Calu3 (cell line): ENCODE measurements at regions of chr2 and their contacts with region 1.

Region 1: GRCh38 chr2:151640087-151640486 is 94.2 kb downstream of the NEB start:
- DNase-seq: no peak
- H3K4me3 Mint-ChIP-seq: no peak overlapping the region
- H3K27ac Mint-ChIP-seq: no peak overlapping the region
- H3K4me1 Mint-ChIP-seq: peaks cover 20% of the 10 kb centered on the region
- H3K27me3 Mint-ChIP-seq: no peaks in the 10 kb centered on the region
- CTCF ChIP-seq: no peak

Region 2: GRCh38 chr2:151409601-151410484 is 230.2 kb before region 1 on chr2 and contains the start of gene RIF1:
- CTCF ChIA-PET with region 1: no interaction called
- intact Hi-C with region 1: no loop called
- DNase-seq: peak; percentile 95
- H3K4me3 Mint-ChIP-seq: peak within 1 kb of the TSS; percentile 98
- H3K27ac Mint-ChIP-seq: peak within 1 kb of the TSS; percentile 93
- H3K4me1 Mint-ChIP-seq: peaks cover 16% of the 10 kb centered on the region
- H3K27me3 Mint-ChIP-seq: no peaks in the 10 kb centered on the region
- CTCF ChIP-seq: peak; percentile 64
- total RNA-seq, gene RIF1: 75.7 and 78.1 TPM in 2 replicates

Region 3: DNA sequence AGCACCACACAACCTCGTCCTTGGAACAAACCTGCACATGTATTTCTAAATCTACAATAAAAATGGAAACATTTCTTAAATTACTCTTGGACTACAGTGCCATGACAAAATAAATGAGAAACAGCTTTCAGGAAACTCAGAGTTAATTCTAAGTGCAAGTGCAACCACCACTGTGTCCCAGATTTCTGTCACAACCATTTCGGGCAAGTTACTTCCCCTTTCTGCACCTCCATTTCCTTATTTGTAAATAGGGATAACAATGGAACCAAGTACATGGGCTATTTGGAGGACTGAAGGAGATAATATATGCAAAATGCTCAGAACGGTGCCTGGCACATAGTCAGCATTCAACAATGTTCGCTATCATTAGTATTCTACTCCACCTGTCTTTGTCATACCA is 365.5 kb after region 1 on chr2:
- CTCF ChIA-PET with region 1: interaction called, 3 read pairs
- intact Hi-C with region 1: loop called (anchors 10 kb)
- DNase-seq: no peak
- H3K4me3 Mint-ChIP-seq: no peak overlapping the region
- H3K27ac Mint-ChIP-seq: no peak overlapping the region
- H3K4me1 Mint-ChIP-seq: peaks cover 11% of the 10 kb centered on the region
- H3K27me3 Mint-ChIP-seq: peaks cover 45% of the 10 kb centered on the region
- CTCF ChIP-seq: no peak